ENCODE measurements at regions of chr3 and their contacts with region 1.

Region 1: DNA sequence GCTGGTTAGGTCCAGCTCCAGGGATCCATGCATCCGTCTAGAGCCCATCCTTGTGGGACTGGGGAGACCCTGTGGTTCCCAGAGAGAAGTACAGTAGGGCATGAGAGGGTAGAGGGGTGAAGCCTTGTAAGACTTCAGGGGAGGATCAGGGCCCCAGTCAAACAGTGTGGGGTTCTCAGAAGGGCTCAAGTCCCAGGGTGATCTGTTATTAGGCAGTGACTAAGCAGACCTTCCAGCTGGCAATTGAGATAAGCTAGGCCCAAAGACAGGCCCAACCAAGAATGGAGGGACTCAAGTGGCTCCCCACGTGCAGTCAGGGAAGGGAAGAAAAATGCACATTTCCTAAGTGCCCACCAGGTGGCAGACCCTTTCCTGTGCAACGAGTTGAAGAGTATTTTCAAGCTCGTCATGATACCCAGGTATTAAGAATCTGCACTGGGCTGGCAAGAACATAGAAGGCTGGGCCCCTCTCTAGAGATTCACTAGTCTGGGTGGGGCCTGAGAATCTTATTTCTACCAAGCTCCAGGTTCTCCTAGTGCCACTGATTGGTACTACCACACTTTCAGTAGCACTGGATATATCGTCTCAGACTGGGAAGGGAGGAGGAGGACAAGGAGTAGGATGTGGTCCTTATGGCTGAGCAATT is 240.8 kb downstream of the NR1D2 start:
- DNase-seq: peak; percentile 57
- ATAC-seq: peak; percentile 91
- H3K4me3 Mint-ChIP-seq: no peak overlapping the region
- H3K27ac Mint-ChIP-seq: no peak overlapping the region
- H3K4me1 Mint-ChIP-seq: peaks cover 2% of the 10 kb centered on the region; the same call in 1 of the 2 replicates
- H3K27me3 Mint-ChIP-seq: peaks cover 2% of the 10 kb centered on the region; the same call in 1 of the 2 replicates
- CTCF ChIP-seq: peak; percentile 62

Region 2: GRCh38 chr3:24160424-24161095 is 25.3 kb before region 1 on chr3:
- CTCF ChIA-PET with region 1: interaction called, 22 read pairs
- POLR2A ChIA-PET with region 1: no interaction called
- DNase-seq: peak; percentile 48
- ATAC-seq: peak; percentile 73
- H3K4me3 Mint-ChIP-seq: no peak overlapping the region
- H3K27ac Mint-ChIP-seq: 0 out of 2 replicates have a peak overlapping the region, but pooled peaks have one; percentile 30
- H3K4me1 Mint-ChIP-seq: peaks cover 53% of the 10 kb centered on the region
- H3K27me3 Mint-ChIP-seq: no peaks in the 10 kb centered on the region
- CTCF ChIP-seq: no peak

Region 3: GRCh38 chr3:24197811-24198210 is 11.9 kb after region 1 on chr3:
- CTCF ChIA-PET with region 1: interaction called, 20 read pairs
- POLR2A ChIA-PET with region 1: no interaction called
- DNase-seq: peak; percentile 55
- ATAC-seq: peak; percentile 98
- H3K4me3 Mint-ChIP-seq: no peak overlapping the region
- H3K27ac Mint-ChIP-seq: no peak overlapping the region
- H3K4me1 Mint-ChIP-seq: no peaks in the 10 kb centered on the region
- H3K27me3 Mint-ChIP-seq: no peaks in the 10 kb centered on the region
- CTCF ChIP-seq: no peak

Region 4: DNA sequence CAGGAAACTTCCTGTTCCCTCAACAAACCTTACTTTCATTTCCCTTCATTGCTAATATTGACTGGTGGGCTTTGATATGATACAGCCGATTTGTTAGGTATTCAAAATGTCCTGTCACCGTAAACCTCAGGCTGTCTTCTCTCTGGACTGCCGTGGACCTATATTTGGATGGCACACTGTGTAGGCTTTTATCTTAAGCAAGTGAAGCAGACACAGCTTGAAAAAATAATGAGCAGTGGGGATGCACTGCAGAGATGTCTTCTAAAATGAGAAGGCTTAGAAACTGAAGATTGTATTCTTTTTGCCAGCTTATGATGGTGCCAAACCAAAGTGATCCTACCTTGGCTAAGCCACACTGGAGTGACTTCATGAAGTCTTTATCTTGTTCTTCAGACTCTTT is 25.5 kb after region 1 on chr3:
- CTCF ChIA-PET with region 1: no interaction called
- POLR2A ChIA-PET with region 1: no interaction called
- DNase-seq: no peak
- ATAC-seq: no peak
- H3K4me3 Mint-ChIP-seq: no peak overlapping the region
- H3K27ac Mint-ChIP-seq: no peak overlapping the region
- H3K4me1 Mint-ChIP-seq: no peaks in the 10 kb centered on the region
- H3K27me3 Mint-ChIP-seq: no peaks in the 10 kb centered on the region
- CTCF ChIP-seq: no peak

Region 5: DNA sequence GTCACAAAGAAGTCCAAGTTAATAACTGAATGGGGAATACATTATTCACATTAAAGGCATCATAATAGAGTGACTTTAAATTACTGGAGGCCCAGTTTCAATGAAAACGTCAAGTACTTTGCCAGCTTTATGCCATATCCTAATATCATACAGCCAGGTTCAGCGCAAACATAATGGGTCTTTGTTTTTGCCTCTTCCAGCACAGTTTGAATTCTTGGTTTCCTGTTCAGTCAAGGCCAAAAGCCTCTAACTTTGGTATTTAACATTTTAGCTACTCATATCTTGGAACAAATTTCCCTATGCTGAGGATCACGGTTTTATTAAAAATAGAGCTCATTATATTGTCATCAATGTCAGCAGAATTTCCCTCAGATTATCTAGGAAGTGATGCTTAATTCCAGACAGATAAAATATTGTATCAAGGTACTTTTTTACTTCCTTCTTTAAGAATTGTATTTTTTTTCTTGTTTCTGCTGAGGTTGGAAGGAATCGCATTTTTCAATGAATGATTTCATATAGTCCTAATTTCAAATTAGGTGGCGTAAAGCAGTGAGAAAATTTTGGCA is 39.6 kb after region 1 on chr3:
- CTCF ChIA-PET with region 1: interaction called, 20 read pairs
- POLR2A ChIA-PET with region 1: no interaction called
- DNase-seq: no peak
- ATAC-seq: no peak
- H3K4me3 Mint-ChIP-seq: no peak overlapping the region
- H3K27ac Mint-ChIP-seq: 0 out of 2 replicates have a peak overlapping the region, but pooled peaks have one; percentile 22
- H3K4me1 Mint-ChIP-seq: peaks cover 23% of the 10 kb centered on the region
- H3K27me3 Mint-ChIP-seq: no peaks in the 10 kb centered on the region
- CTCF ChIP-seq: no peak

Region 6: DNA sequence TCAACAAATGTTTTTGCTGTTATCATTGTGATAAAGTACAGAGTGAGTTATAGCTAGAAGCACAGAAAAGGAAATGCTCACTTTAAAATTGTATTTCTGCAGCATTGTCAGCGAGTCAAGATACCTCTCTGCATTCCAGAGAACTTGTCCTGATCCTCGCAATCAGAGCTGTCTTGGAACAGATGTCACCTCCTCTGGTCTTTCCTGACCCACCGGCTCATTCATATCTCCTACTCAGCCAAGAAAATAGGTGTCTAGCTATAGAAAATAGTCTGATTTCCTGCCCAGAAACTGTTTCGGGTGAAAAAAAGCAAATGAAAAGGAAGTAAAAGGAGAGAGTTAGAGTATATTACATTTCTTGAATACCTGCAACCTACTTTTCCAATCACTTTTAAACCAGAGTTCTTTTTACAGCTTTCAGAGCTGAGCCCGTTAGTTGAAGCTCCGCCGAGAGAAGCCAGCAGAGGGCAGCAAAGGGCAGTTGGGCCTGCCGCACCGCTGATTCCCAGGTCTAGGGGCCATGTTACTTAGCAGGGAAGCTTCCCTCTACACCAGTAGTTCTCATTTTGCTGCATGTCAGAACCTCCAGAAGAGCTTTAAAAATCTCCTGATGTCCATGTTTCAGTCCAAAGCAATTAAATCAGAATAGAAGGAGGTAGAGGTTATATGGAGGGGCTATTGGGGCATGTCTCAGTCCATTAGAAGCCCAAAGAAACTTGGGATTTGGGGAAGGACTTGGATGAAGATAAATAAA is 494.5 kb after region 1 on chr3:
- CTCF ChIA-PET with region 1: interaction called, 18 read pairs
- POLR2A ChIA-PET with region 1: no interaction called
- DNase-seq: peak; percentile 83
- ATAC-seq: peak; percentile 71
- H3K4me3 Mint-ChIP-seq: no peak overlapping the region
- H3K27ac Mint-ChIP-seq: no peak overlapping the region
- H3K4me1 Mint-ChIP-seq: peaks cover 20% of the 10 kb centered on the region
- H3K27me3 Mint-ChIP-seq: no peaks in the 10 kb centered on the region
- CTCF ChIP-seq: peak; percentile 74

Measured in WTC11 (cell line).